Naive thymus-derived CD8-positive, alpha-beta T cell (primary cell): ENCODE measurements at regions of chr6 and their contacts with region 1.

Region 1: DNA sequence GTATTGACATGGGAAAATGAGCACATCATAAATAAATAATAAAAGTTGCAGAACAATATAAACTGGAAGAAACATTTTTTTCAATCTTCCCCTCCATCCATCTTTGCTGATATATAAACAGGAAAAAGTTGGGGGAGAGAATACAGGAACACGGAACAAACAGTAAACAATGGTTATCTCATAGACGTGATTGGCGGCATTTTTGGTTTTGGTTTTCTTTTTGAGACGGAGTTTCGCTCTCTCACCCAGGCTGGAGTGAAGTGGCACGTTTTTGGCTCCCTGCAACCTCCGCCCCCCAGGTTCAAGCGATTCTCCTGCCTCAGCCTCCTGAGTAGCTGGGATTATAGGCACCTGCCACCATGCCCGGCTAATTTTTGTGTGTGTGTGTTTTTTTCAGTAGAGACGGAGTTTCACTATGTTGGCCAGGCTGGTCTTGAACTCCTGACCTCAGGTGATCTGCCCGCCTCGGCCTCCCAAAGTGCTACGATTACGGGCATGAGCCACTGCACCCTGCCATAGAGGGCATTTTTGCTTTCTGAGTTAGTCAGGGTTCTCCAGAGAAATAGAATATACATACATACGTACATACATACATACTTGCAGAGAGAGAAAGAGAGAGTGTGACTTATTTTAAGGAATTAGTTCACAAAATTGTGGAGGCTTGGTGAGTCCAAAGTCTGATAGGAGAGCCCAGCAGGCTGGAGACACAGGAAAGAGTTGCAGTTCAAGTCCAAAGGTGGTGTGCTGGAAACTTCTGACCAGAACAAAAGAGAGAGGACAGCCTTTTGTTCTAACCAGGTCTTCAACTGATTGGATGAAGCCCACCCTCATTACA is 22.6 kb downstream of the GNL1 start:
- DNase-seq: no peak
- ATAC-seq: no peak
- H3K4me3 Mint-ChIP-seq: peak overlapping the region; percentile 24 to 94 (median 72)
- H3K27ac Mint-ChIP-seq: peak overlapping the region in 4 of 10 donors; percentile 68 to 95 (median 91)
- H3K4me1 Mint-ChIP-seq: peaks cover 8 to 39% (median 29%) of the 10 kb centered on the region in 4 donors
- H3K27me3 Mint-ChIP-seq: no peaks in the 10 kb centered on the region

Region 2: DNA sequence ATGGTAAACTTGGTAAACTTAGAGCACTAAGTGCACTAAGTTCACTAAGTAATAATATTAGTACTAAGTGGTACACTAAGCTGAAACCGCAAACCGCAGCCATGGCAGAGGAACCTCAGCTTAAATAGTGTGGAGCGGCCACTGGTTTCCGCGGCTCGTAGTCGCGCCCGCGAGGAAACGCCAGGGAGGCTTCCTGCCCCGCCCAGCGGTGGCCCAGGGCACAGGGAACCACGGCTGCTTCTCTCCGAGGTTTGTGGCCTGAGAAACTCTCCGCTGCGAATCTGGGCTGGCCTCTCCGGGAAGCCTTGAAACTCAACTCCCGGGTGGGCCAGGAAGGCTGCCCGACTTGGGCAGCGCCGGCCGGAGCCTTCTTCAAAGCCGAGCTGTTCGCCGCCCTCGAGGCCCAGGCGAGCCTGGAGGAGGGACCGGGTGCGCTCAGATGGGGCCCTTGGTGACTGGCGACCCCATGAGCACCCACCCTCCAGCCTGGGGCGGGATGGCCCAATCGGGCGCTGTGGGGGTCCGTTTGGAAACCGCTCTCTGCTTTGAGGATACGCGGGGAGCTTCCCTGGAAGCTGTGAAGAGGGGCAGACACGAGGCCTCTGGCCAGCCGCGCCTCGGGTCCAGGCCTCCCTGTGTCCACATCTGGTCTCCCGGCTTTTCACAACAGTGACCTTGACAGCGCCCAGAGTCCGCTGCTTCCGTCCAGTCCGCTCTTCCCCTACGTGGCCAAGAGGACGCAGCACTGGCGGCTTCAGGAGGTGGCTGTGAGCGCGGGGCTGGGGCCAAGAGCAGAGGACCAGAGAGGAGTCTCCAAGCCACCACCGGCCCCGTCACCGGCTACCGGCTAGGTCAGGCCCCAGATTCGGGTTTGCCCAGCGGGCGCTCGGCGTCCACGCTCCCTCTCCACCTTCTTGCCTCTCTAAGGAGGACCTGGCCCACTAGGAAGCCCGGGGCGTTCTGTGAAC is 69.7 kb before region 1 on chr6:
- POLR2A ChIA-PET with region 1: no interaction called
- DNase-seq: peak in 8 of 10 donors; percentile 31 to 69 (median 52)
- ATAC-seq: peak; percentile 52 to 61
- H3K4me3 Mint-ChIP-seq: peak overlapping the region in 9 of 10 donors; percentile 6 to 91 (median 49)
- H3K27ac Mint-ChIP-seq: no peak overlapping the region
- H3K4me1 Mint-ChIP-seq: peaks cover 16 to 54% (median 44%) of the 10 kb centered on the region in 4 donors
- H3K27me3 Mint-ChIP-seq: peaks cover 62 to 95% (median 72%) of the 10 kb centered on the region in 5 donors

Region 3: DNA sequence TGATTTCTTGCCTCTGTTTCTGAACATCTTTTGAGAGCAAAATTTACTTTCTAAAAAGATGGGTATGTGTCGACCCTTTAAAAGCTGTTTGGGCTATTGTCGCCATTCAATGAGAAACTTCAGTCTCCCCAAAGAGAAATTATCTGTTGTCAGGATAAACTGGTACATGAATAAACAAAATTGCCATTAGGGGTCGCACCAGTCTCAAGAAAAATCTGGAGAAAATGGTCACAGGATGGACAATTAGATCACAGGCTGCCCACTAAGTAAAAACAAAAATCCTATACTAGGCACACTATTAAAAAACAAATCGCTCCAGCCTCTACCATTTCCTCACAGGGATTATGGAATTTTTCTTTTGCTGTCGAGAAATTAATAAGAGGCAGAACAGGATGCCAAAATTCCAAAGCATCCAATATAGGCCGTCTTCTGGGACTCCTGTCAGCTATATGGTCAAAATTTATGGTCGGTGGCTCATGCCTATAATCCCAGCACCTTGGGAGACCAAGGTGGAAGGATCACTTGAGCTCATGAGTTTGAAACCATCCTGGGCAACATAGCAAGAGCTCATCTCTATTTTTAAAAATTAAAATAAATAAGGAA is 49.9 kb before region 1 on chr6:
- POLR2A ChIA-PET with region 1: interaction called, 211 read pairs
- DNase-seq: peak in 4 of 10 donors; percentile 38 to 62 (median 54)
- ATAC-seq: no peak
- H3K4me3 Mint-ChIP-seq: no peak overlapping the region
- H3K27ac Mint-ChIP-seq: peak overlapping the region in 2 of 10 donors; percentile 19 to 23
- H3K4me1 Mint-ChIP-seq: peaks cover 21 to 38% (median 35%) of the 10 kb centered on the region in 4 donors
- H3K27me3 Mint-ChIP-seq: peaks cover 16 to 34% (median 28%) of the 10 kb centered on the region in 5 donors

Region 4: DNA sequence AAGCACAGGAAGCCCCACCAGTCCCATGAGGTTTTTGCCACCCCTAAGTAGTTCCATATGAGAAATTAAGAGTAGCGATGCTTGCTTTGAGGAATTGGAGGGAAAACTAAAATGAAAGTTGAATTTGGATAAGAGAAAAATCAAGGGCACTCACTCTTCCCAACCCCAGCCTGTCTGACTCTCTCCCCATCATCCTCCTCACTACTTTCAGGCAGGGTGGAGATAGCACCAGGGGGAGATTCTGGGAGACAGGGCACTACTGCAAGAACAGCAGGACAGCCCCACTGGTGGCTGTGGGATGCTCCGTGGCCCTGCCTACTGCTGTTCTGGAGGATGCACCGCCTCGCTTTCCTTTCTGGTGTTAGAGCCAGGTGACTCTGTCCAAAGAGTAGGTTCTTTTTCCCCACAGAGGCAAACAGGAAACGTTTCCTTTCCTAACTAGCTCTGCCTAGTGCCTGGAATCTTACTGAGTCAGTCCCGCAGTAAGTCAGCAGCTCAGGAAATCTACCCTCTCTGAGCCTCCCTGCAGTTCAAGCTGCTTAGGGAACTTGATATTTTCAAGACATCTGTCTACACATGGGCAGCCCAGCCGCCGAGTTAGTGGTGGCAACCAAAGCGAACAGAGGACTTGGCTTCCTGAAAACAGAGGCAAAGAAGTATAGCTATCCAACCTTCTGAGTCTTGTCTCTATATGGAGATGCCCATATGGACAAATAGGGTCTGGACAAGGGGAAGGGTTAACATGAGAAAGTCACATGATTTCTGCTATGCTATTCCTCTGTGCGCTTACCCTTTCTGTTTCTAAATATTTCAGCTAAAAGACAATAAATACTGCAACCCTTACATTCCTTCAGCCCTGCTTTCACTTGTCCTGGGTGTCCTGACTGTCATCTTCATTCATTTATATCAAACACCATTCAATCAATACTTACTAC is 33.0 kb before region 1 on chr6:
- POLR2A ChIA-PET with region 1: interaction called, 213 read pairs
- DNase-seq: no peak
- ATAC-seq: peak; percentile 67 to 81
- H3K4me3 Mint-ChIP-seq: peak overlapping the region; percentile 73 to 89 (median 82)
- H3K27ac Mint-ChIP-seq: peak overlapping the region in 9 of 10 donors; percentile 73 to 91 (median 89)
- H3K4me1 Mint-ChIP-seq: peaks cover 28 to 53% (median 47%) of the 10 kb centered on the region in 4 donors
- H3K27me3 Mint-ChIP-seq: no peaks in the 10 kb centered on the region

Region 5: DNA sequence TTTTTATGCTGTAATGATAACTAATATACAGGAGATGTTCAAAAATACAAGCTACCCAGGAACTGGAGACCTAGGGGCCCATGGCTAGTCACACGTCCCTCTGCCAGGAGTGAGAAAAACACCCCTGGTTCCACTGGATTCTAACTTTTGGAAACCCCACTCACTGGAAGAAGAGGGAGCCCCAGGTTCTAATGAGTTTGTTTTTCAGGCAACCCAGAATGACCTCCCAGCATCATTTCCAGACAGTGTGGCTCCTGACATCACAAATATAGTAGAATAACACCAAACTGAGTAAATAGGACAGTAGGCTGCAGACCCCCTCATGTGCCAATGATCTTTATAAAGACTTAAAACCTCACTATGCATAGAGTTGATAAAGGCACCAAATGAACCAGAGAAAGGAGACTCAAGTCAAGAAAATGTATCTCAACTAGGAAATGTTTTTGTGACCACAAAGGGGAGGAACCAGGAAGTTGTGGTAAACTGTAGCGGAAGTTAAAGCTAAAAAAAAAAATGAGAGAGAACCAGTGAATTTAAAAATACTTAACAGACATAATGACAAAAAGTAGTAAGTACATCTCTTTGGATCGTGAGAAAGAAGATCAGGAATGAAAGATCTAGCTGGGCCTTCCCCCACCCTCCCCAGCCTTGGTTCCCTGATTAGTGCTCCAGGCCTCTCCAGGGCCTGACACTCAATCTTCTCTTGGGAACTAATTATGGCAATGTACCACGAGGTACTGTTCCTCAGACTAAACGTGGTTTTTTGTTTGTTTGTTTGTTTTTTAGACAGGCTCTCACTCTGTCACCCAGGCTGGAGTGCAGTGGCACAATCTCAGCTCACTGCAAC is 24.6 kb before region 1 on chr6:
- POLR2A ChIA-PET with region 1: interaction called, 43 read pairs
- DNase-seq: peak in 5 of 10 donors; percentile 53 to 87 (median 86)
- ATAC-seq: peak; percentile 88 to 90
- H3K4me3 Mint-ChIP-seq: peak overlapping the region; percentile 65 to 87 (median 76)
- H3K27ac Mint-ChIP-seq: peak overlapping the region; percentile 53 to 96 (median 88)
- H3K4me1 Mint-ChIP-seq: peaks cover 22 to 76% (median 65%) of the 10 kb centered on the region in 4 donors
- H3K27me3 Mint-ChIP-seq: peaks cover 0 to 2% (median 0%) of the 10 kb centered on the region in 5 donors

Region 6: GRCh38 chr6:30515932-30516753 is 17.5 kb before region 1 on chr6:
- POLR2A ChIA-PET with region 1: interaction called, 43 read pairs
- DNase-seq: peak; percentile 71 to 97 (median 91)
- ATAC-seq: peak; percentile 84 to 85
- H3K4me3 Mint-ChIP-seq: peak overlapping the region; percentile 70 to 94 (median 90)
- H3K27ac Mint-ChIP-seq: peak overlapping the region; percentile 96 to 100 (median 99)
- H3K4me1 Mint-ChIP-seq: peaks cover 18 to 80% (median 66%) of the 10 kb centered on the region in 4 donors
- H3K27me3 Mint-ChIP-seq: no peaks in the 10 kb centered on the region

Region 7: DNA sequence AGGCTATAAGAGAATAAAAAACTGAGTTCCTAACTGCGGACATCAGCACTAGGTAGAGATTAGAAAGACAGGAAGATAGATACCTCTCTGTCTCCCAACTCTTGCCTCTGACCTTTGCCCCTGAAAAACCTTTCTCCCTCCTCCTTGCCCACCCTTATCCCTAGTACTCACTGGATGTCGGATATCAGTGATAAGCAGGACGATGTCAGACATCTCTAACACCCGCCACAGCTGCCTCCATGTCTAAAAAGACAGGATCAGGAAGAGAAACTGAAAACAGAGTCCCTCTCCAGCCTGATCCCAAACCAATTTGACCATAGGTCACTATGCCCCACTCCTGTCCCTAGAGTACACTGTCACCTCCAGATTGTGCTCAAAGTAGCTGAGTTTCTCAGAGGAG is 20.7 kb after region 1 on chr6:
- POLR2A ChIA-PET with region 1: no interaction called
- DNase-seq: no peak
- ATAC-seq: no peak
- H3K4me3 Mint-ChIP-seq: peak overlapping the region; percentile 61 to 100 (median 98)
- H3K27ac Mint-ChIP-seq: peak overlapping the region; percentile 32 to 100 (median 99)
- H3K4me1 Mint-ChIP-seq: peaks cover 25 to 69% (median 43%) of the 10 kb centered on the region in 4 donors
- H3K27me3 Mint-ChIP-seq: peaks cover 0 to 2% (median 0%) of the 10 kb centered on the region in 5 donors